Activated CD4-positive, alpha-beta T cell treated with anti-CD3 and anti-CD28 coated beads for 36 hours (primary cell): ENCODE measurements at regions of chr10 and their contacts with region 1.

Region 1: DNA sequence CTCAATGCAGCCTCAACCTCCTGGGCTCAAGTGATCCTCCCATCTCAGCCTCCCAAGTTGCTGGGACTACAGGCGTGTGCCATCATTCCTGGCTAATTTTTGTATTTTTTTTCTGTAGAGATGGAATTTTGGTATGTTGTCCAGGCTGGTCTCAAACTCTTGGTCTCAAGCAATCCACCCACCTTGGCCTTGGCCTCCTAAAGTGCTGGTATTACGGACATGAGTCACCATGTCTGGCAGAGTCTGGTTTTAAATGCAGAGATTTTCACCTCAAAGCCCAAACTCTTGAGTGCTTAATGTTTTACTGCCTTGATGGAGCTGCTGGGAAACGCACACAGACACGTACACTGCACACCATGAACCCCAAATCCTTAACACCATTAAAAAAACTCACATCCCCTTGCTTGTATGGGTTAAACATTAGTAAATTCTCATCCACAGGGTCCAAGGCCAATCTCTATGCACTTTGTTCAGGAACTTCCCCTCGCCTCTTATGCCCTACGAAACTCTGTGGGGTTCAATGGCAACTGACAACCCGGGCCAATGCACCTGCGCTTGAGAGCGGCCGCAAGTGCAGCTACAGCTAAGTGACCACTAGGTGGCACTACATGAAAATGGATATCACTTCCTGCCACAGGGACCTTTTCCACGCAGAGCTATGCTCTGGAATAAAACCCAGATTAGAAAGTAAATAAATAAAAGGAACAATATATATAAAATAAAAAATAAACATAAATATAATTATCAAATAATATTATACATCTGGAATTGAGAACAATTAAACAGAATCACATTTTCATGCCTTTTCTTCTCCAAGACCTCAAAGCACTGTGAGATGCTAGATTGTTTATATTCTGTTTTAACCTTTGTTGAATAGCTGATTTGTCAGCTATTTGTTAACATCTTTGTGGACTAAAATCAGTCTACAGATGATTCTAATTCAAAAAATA is 66.9 kb upstream of the AFAP1L2 start:
- DNase-seq: peak; percentile 79
- ATAC-seq: peak; percentile 87
- H3K4me3 Mint-ChIP-seq: no peak overlapping the region
- H3K27ac Mint-ChIP-seq: peak overlapping the region; percentile 27
- H3K4me1 Mint-ChIP-seq: peaks cover 21% of the 10 kb centered on the region
- H3K27me3 Mint-ChIP-seq: no peaks in the 10 kb centered on the region

Region 2: DNA sequence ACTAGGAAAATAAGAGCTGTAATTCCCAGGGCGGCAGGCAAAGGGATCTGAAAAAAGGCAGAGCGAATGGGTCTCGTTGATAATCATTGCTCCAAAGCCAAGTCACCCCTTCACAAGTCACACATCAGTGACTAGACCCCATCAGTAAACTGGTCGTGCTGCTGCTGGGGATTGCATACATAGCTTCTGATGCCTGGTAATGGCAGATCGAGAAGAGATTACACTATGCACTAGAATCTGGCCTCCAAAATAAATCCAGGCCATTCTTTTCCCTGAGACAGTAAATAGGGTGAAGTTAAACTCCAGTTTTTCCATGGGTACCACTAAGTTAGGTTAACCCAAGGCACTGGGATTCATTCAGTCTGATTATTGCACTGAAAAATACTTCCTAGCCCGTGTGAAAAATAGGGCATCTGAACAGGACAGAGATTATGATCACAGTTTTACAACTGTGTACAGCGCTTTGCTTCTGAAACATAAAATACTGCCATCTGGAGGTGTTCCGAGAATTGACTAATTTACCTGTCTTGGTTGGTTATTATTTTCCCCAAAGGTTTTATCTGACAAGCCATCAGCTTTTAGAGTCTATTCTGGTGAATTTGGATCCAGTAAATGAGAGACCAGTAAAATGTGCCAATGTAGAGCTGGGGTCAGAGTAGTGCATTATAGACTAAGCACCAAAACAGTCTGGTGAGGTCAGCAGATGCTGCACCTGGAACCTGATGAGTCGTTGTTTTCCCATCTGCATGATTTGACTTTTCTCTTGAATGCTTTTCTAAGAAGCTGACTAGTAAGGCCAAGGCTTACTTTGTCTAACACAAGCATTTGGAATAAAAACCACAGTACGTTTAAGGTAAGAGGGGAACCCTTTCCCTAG is 15.9 kb after region 1 on chr10:
- CTCF ChIA-PET with region 1: interaction called, 69 read pairs
- POLR2A ChIA-PET with region 1: interaction called, 3 read pairs
- intact Hi-C with region 1: no loop called
- DNase-seq: peak; percentile 43
- ATAC-seq: peak; percentile 78
- H3K4me3 Mint-ChIP-seq: no peak overlapping the region
- H3K27ac Mint-ChIP-seq: peak overlapping the region; percentile 88
- H3K4me1 Mint-ChIP-seq: peaks cover 64% of the 10 kb centered on the region
- H3K27me3 Mint-ChIP-seq: no peaks in the 10 kb centered on the region

Region 3: DNA sequence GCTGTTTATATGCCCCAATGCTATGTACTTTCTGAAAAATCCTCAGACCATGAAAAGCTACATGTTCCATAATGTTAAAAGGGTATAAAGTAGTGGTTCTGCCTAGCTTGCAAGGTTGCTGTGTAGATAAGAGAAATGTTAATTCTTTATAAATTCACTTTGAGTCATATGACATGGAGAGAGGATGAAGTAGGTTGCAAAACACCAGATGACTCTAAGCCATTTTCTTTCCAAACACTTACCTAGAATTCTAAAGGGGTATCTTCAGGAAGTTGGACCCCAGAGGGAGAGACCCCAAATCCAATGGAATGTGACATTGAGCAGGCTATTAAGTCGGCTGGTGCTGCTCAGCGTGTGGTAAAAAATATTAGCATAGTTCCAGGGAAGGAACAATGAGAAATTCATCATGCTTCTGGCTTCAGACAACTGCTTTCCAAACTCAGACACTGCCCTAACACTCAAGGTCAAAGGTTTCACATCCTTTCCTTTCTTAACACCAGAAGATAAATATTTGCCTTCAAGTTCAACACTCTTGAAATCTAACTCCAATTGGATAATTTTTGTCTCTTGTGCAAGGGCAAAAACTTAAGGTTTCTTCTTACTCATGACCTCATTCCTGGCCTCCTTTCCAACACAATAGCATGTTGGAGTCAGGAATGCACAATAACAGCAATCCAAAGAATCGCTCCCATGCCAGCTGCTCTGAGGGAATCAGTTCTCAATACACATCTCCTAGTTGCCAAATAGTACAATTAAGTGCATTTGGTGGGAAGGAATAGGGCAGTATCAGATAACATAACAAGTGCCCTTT is 33.7 kb after region 1 on chr10:
- CTCF ChIA-PET with region 1: interaction called, 15 read pairs
- POLR2A ChIA-PET with region 1: interaction called, 3 read pairs
- intact Hi-C with region 1: no loop called
- DNase-seq: no peak
- ATAC-seq: peak; percentile 34
- H3K4me3 Mint-ChIP-seq: no peak overlapping the region
- H3K27ac Mint-ChIP-seq: peak overlapping the region; percentile 79
- H3K4me1 Mint-ChIP-seq: peaks cover 89% of the 10 kb centered on the region
- H3K27me3 Mint-ChIP-seq: no peaks in the 10 kb centered on the region

Region 4: DNA sequence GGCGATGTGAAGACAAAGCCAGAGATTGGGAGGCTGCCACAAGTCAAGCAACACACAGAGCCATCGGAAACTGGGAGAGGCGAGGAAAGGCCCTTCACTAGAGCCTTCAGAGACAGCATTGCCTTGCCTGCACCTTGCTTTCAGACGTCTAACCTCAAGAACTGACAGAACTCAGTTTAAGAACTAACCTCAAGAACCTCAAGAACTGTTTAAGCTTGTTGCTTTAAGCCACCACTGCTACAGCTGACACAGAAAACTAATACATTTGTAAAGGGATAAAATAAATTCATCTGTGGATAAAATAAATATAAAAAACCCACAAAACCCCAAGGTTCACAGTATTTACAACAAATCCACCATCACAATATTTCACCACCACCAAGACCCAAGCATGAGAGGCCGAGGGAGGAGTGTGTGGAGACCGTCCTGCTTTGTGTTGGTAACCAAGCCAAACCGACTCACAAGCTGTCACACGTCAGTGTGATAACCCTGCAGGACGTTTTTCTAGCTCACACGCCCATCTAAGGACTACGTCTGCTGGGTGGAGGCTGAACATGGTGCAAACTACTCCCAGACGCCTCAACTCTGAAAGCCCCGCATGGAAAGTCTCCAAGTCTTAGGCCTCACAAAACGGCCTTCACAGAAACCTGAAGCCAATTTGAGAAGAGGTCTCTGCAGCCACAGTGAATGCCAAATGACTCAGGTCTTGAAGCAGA is 70.0 kb after region 1 on chr10:
- CTCF ChIA-PET with region 1: interaction called, 79 read pairs
- POLR2A ChIA-PET with region 1: interaction called, 3 read pairs
- intact Hi-C with region 1: no loop called
- DNase-seq: peak; percentile 85
- ATAC-seq: peak; percentile 84
- H3K4me3 Mint-ChIP-seq: peak overlapping the region; percentile 55
- H3K27ac Mint-ChIP-seq: peak overlapping the region; percentile 99
- H3K4me1 Mint-ChIP-seq: peaks cover 90% of the 10 kb centered on the region
- H3K27me3 Mint-ChIP-seq: no peaks in the 10 kb centered on the region

Region 5: GRCh38 chr10:114694752-114695151 is 223.5 kb after region 1 on chr10:
- CTCF ChIA-PET with region 1: interaction called, 13 read pairs
- POLR2A ChIA-PET with region 1: no interaction called
- intact Hi-C with region 1: loop called (anchors 1 to 5 kb)
- DNase-seq: peak; percentile 69
- ATAC-seq: no peak
- H3K4me3 Mint-ChIP-seq: no peak overlapping the region
- H3K27ac Mint-ChIP-seq: no peak overlapping the region
- H3K4me1 Mint-ChIP-seq: peaks cover 10% of the 10 kb centered on the region
- H3K27me3 Mint-ChIP-seq: peaks cover 4% of the 10 kb centered on the region

Region 6: GRCh38 chr10:114937962-114938855 is 467.0 kb after region 1 on chr10 and contains the start of gene TRUB1:
- CTCF ChIA-PET with region 1: no interaction called
- POLR2A ChIA-PET with region 1: no interaction called
- intact Hi-C with region 1: loop called in 1 of 2 experiments (anchors 10 kb)
- DNase-seq: peak; percentile 95
- ATAC-seq: peak; percentile 100
- H3K4me3 Mint-ChIP-seq: peak within 1 kb of the TSS; percentile 96
- H3K27ac Mint-ChIP-seq: peak within 1 kb of the TSS; percentile 94
- H3K4me1 Mint-ChIP-seq: peaks cover 25% of the 10 kb centered on the region
- H3K27me3 Mint-ChIP-seq: no peaks in the 10 kb centered on the region
- total RNA-seq, gene TRUB1: 13.4 to 15.0 TPM